ENCODE measurements at regions of chr6 and their contacts with region 1.

Region 1: DNA sequence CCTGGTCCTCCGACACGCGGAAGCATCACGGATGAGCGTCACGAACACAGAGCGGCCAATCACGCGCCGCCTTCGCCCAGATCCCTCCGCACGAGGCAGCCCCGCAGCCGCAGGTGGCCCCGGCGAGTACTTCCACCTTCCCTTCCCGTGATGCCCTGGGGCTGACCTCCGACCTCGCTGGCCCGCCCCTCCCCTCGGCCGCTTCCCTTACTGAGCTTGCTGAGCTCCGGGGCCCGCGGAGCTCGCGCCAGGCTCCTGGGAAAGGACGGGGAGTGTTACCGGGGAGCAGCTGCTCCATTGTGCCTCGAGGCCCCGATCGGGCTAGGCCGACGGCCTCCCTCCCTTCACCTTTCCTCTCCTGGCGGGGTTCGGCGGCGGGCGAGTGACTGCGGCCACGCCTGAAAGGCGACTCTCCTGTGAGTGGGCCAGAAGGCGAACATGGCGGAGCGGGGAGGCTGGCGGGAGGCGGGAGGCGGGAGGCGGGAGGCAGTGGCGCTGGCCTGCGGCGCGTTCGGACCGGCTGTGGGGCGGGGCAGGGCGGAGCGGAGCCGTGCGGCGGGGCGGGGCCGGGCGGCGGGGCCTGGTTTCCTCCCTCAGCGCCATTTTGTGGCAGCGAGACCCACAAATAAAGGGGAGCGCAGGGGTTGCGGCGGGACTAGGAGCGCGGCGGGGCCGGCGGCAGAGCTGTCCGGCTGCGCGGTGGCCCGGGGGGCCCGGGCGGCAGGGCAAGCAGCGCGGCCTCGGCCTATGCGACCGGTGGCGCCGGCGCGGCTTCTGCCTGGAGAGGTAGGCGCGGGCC is at the start of gene WTAP:
- DNase-seq: peak; percentile 98
- H3K4me3 ChIP-seq: peak within 1 kb of the TSS; percentile 82 to 92 (median 89)
- H3K27ac ChIP-seq: peak within 1 kb of the TSS; percentile 98 to 99 (median 99)
- H3K4me1 ChIP-seq: peaks cover 38 to 59% (median 53%) of the 10 kb centered on the region in 4 donors
- H3K27me3 ChIP-seq: no peaks in the 10 kb centered on the region
- CTCF ChIP-seq: peak in 1 of 3 experiments; percentile 8
- EP300 ChIP-seq: no peak
- POLR2A ChIP-seq: peak; percentile 49
- total RNA-seq, gene WTAP: 62.7 to 96.9 (median 75.3) TPM

Region 2: GRCh38 chr6:159693128-159693893 is 33.8 kb before region 1 on chr6 and contains the start of gene SOD2:
- intact Hi-C with region 1: loop called (anchors 5 kb)
- DNase-seq: peak; percentile 97
- H3K4me3 ChIP-seq: peak within 1 kb of the TSS; percentile 85 to 100 (median 90)
- H3K27ac ChIP-seq: peak within 1 kb of the TSS; percentile 96 to 99 (median 98)
- H3K4me1 ChIP-seq: peaks cover 36 to 55% (median 54%) of the 10 kb centered on the region in 4 donors
- H3K27me3 ChIP-seq: no peaks in the 10 kb centered on the region
- CTCF ChIP-seq: no peak
- EP300 ChIP-seq: no peak
- POLR2A ChIP-seq: peak; percentile 95
- total RNA-seq, gene SOD2: 147 to 927 (median 395) TPM